Natural killer cell (primary cell): ENCODE measurements at regions of chrX and their contacts with region 1.

Region 1: GRCh38 chrX:136953867-136954787 is 73.6 kb upstream of the RBMX start:
- DNase-seq: peak; percentile 17 to 70
- ATAC-seq: peak; percentile 64 to 81 (median 70)
- H3K4me3 ChIP-seq: no peak overlapping the region
- H3K4me3 Mint-ChIP-seq: no peak overlapping the region
- H3K27ac ChIP-seq: no peak overlapping the region
- H3K27ac Mint-ChIP-seq: no peak overlapping the region
- H3K4me1 ChIP-seq: peaks cover 3% of the 10 kb centered on the region
- H3K4me1 Mint-ChIP-seq: no peaks in the 10 kb centered on the region
- H3K27me3 ChIP-seq: no peaks in the 10 kb centered on the region
- H3K27me3 Mint-ChIP-seq: peaks cover 0 to 19% of the 10 kb centered on the region in 2 donors
- CTCF ChIP-seq: peak; percentile 44

Region 2: GRCh38 chrX:137051978-137052642 is 98.0 kb after region 1 on chrX:
- intact Hi-C with region 1: loop called (anchors 2 kb)
- DNase-seq: peak; percentile 61 to 85
- ATAC-seq: peak; percentile 91 to 97 (median 95)
- H3K4me3 ChIP-seq: peak overlapping the region; percentile 35
- H3K4me3 Mint-ChIP-seq: peak overlapping the region; percentile 91
- H3K27ac ChIP-seq: no peak overlapping the region
- H3K27ac Mint-ChIP-seq: peak overlapping the region in 1 of 2 donors; percentile 79
- H3K4me1 ChIP-seq: peaks cover 15% of the 10 kb centered on the region
- H3K4me1 Mint-ChIP-seq: peaks cover 13 to 16% of the 10 kb centered on the region in 2 donors
- H3K27me3 ChIP-seq: no peaks in the 10 kb centered on the region
- H3K27me3 Mint-ChIP-seq: peaks cover 19 to 51% of the 10 kb centered on the region in 2 donors
- CTCF ChIP-seq: peak; percentile 69